IMR-90 (cell line): ENCODE measurements at regions of chr14 and their contacts with region 1.

Region 1: DNA sequence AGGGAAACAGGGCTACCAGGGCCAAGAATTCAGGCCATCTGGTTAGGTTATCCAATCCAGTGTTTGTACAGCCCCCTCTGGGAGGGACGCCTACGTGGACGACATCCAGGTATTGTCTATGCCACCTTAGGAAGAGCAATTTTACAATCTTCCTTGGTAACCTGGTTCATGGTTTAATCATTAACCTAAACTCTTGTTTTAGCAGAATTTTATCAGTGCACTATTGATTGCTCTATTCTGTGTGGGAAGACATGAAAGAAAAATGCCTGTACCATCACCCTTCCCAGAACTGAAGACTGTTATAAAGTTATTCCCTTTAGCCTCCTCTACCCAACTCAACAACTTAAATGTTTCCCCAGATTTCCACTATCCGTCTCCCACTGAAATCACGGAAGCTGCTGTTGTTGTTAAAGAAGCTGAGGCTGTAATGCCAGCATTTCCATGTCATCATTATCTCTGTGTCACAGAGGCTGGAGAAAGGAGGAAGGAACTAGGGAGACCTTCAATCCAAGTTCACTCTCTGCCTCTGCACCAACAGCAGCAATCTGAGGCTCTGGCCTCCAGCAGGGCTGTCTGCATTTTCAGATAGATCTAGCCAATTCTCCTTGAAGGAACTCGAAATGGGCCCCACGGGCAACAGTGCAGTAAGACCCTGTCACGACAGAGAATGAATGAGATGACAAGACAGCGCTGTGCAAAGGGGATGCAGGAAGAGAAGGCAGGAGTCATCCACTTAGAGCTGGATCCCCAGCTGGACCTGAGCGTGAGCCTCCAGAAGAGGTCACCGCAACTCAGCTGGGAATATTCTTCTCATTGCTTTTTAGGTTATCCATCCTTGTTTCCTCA is 183.4 kb upstream of the GZMB start:
- DNase-seq: peak; percentile 52
- ATAC-seq: peak; percentile 92
- H3K4me3 ChIP-seq: no peak overlapping the region
- H3K27ac ChIP-seq: no peak overlapping the region
- H3K4me1 ChIP-seq: no peaks in the 10 kb centered on the region
- H3K27me3 ChIP-seq: no peaks in the 10 kb centered on the region
- CTCF ChIP-seq: peak; percentile 62
- POLR2A ChIP-seq: no peak
- RAD21 ChIP-seq: peak; percentile 81

Region 2: DNA sequence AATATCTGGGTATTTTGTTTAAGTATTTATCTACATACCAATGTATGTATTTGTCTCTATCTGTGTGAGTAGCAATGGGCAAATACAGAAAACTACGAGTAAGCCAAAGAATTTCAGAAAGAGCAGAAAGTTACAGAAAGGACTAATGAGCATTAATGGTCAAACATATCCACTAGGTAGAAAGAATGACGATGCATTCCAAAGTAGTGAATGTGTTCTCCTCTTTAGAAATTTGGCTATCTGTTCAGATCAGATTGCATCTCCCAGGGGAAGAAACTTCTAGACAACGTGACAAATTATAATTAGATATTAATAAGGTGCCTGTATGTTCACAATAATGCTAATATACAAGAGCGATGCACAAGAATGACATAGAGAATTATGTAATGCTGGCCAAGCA is 11.1 kb after region 1 on chr14:
- CTCF ChIA-PET with region 1: no interaction called
- POLR2A ChIA-PET with region 1: no interaction called
- dilution Hi-C with region 1: no loop called
- in situ Hi-C with region 1: no loop called
- intact Hi-C with region 1: no loop called
- DNase-seq: no peak
- ATAC-seq: no peak
- H3K4me3 ChIP-seq: no peak overlapping the region
- H3K27ac ChIP-seq: no peak overlapping the region
- H3K4me1 ChIP-seq: no peaks in the 10 kb centered on the region
- H3K27me3 ChIP-seq: no peaks in the 10 kb centered on the region
- CTCF ChIP-seq: no peak
- POLR2A ChIP-seq: no peak
- RAD21 ChIP-seq: no peak

Region 3: GRCh38 chr14:24965934-24966578 is 148.6 kb after region 1 on chr14:
- CTCF ChIA-PET with region 1: no interaction called
- POLR2A ChIA-PET with region 1: no interaction called
- dilution Hi-C with region 1: no loop called
- in situ Hi-C with region 1: no loop called
- intact Hi-C with region 1: loop called (anchors 5 kb)
- DNase-seq: peak; percentile 90
- ATAC-seq: peak; percentile 90
- H3K4me3 ChIP-seq: peak overlapping the region; percentile 3; the same call in 1 of the 2 replicates
- H3K27ac ChIP-seq: peak overlapping the region; percentile 54; the same call in 1 of the 2 replicates
- H3K4me1 ChIP-seq: peaks cover 3% of the 10 kb centered on the region
- H3K27me3 ChIP-seq: no peaks in the 10 kb centered on the region
- CTCF ChIP-seq: no peak
- POLR2A ChIP-seq: no peak
- RAD21 ChIP-seq: no peak

Region 4: GRCh38 chr14:25042362-25043299 is 225.2 kb after region 1 on chr14:
- CTCF ChIA-PET with region 1: interaction called, 3 read pairs
- POLR2A ChIA-PET with region 1: no interaction called
- dilution Hi-C with region 1: no loop called
- in situ Hi-C with region 1: loop called (anchors 5 kb)
- intact Hi-C with region 1: loop called (anchors 1 kb)
- DNase-seq: peak; percentile 68
- ATAC-seq: peak; percentile 51
- H3K4me3 ChIP-seq: no peak overlapping the region
- H3K27ac ChIP-seq: no peak overlapping the region
- H3K4me1 ChIP-seq: no peaks in the 10 kb centered on the region
- H3K27me3 ChIP-seq: no peaks in the 10 kb centered on the region
- CTCF ChIP-seq: peak; percentile 54
- POLR2A ChIP-seq: no peak
- RAD21 ChIP-seq: peak; percentile 77

Region 5: GRCh38 chr14:25132732-25133422 is 315.4 kb after region 1 on chr14:
- CTCF ChIA-PET with region 1: interaction called, 11 read pairs
- POLR2A ChIA-PET with region 1: no interaction called
- dilution Hi-C with region 1: no loop called
- in situ Hi-C with region 1: loop called (anchors 5 kb)
- intact Hi-C with region 1: loop called (anchors 1 kb)
- DNase-seq: peak; percentile 55
- ATAC-seq: peak; percentile 100
- H3K4me3 ChIP-seq: no peak overlapping the region
- H3K27ac ChIP-seq: no peak overlapping the region
- H3K4me1 ChIP-seq: no peaks in the 10 kb centered on the region
- H3K27me3 ChIP-seq: peaks cover 16% of the 10 kb centered on the region
- CTCF ChIP-seq: peak; percentile 81
- POLR2A ChIP-seq: no peak
- RAD21 ChIP-seq: peak; percentile 86

Region 6: GRCh38 chr14:25250516-25250915 is 433.1 kb after region 1 on chr14:
- CTCF ChIA-PET with region 1: no interaction called
- POLR2A ChIA-PET with region 1: no interaction called
- dilution Hi-C with region 1: no loop called
- in situ Hi-C with region 1: no loop called
- intact Hi-C with region 1: no loop called
- DNase-seq: no peak
- ATAC-seq: no peak
- H3K4me3 ChIP-seq: no peak overlapping the region
- H3K27ac ChIP-seq: no peak overlapping the region
- H3K4me1 ChIP-seq: no peaks in the 10 kb centered on the region
- H3K27me3 ChIP-seq: no peaks in the 10 kb centered on the region
- CTCF ChIP-seq: no peak
- POLR2A ChIP-seq: no peak
- RAD21 ChIP-seq: no peak